ENCODE measurements at regions of chr14 and their contacts with region 1.

Region 1: DNA sequence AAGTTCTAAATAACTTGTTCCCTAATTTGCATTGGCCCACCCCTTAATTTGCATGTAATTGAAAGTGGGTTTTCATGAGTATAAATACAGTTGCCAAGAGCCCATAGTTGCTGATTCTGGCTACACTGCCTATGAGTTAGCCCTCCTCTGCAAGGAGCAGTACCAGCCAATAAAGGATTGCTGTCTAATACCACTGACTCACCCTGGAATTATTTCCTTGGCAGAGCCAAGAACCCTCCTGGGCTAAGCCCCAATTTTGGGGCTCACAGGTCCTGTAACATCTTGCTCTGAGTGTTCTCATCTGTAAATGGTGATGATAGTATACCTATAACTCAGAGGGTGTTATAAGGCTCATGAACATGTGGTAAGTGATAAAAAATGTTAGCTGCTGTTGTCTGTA is 6.8 kb downstream of the TTC8 start:
- DNase-seq: peak in 1 of 2 donors; percentile 77
- H3K4me3 ChIP-seq: no peak overlapping the region
- H3K27ac ChIP-seq: peak overlapping the region; percentile 56 to 81
- H3K4me1 ChIP-seq: peaks cover 8 to 22% of the 10 kb centered on the region in 2 donors
- H3K27me3 ChIP-seq: no peaks in the 10 kb centered on the region
- CTCF ChIP-seq: no peak

Region 2: DNA sequence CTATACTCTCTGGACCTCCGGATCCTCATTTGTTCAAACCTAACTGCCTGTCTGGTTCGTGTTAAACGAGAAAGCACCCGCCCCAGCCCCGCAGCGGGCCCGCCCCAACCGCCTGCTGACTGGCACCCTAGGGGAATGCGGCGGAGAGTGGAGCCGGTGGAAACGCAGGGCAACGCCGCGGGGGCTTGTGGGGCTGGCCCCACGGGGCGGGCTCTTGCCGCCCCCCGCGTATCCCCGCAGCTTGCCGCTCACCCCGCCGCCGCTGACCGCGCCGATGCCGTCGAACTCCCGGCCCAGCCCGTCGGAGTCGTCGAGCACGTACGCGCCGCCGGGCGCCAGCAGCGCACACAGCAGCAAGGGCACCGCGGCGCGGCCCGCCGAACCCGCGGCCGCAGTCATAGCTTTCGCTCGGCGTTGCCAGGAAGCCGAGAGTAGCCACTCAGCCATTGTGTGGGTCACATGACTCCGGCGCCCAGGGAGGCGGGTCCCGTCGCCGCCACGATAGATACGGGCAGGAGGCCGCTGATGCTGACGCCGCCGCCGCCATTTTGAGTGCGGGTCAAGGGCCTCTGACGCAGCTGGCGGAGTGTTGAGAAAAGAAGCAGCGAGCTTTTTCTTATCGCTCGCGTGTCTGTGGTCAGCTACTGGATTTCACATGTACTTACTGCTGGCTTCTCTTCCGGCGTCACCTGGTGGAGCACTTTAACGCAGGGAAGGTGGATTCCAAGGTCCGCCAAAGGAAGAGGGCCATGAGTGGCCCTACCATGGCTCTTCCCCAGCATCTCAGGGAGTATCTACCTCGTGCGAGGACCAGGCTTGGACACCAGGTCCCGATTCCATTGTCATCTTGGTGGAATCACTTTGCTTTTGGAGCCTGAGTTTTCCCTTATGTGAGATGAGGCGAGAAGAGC is 838.3 kb before region 1 on chr14 and contains the start of gene GALC:
- intact Hi-C with region 1: loop called (anchors 5 kb)
- DNase-seq: peak; percentile 90 to 98
- H3K4me3 ChIP-seq: peak within 1 kb of the TSS; percentile 93 to 95
- H3K27ac ChIP-seq: peak within 1 kb of the TSS; percentile 95 to 96
- H3K4me1 ChIP-seq: peaks cover 0 to 16% of the 10 kb centered on the region in 2 donors
- H3K27me3 ChIP-seq: no peaks in the 10 kb centered on the region
- CTCF ChIP-seq: no peak
- total RNA-seq, gene GALC: 31.7 TPM

Region 3: GRCh38 chr14:88765130-88765529 is 66.2 kb before region 1 on chr14:
- intact Hi-C with region 1: no loop called
- DNase-seq: no peak
- H3K4me3 ChIP-seq: no peak overlapping the region
- H3K27ac ChIP-seq: no peak overlapping the region
- H3K4me1 ChIP-seq: no peaks in the 10 kb centered on the region
- H3K27me3 ChIP-seq: no peaks in the 10 kb centered on the region
- CTCF ChIP-seq: no peak

Region 4: DNA sequence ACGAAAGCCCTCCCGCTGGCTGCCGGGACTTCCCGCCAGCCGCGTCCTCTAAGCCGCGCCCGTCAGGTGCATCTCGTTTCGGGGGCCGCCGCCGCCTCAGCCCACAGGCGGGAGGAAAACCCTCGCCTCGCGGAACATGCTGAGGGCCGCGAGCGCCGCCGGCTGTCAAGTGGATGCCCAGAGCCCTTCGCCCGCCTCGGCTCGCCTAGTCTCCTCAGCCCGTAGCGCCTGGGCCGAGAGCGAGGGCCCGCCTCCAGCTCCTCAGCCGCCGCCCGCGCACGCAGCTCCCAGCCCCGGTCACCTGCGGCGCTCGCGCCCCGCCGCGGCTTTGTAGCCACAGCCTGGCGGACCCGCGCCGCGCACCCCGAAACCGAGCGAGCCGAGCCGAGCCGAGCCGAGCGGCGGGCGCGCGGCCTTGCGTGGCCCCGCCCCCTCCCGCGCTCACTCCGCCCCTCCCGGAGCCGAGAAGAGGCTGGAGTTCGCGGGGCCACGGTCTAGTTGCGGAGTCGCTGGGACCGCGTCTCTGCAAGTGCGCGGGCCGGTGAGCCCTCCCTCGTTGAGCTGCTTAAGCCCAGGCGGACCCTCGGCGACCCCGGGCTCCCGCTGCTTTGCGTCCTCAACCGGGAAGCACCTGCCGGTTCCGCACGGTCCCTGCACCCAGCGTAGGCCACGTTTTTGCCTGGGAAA is 38.6 kb before region 1 on chr14 and contains the start of gene EML5:
- intact Hi-C with region 1: loop called (anchors 2 kb)
- DNase-seq: peak; percentile 23 to 90
- H3K4me3 ChIP-seq: peak within 1 kb of the TSS; percentile 71 to 94
- H3K27ac ChIP-seq: peak within 1 kb of the TSS in 1 of 2 donors; percentile 81
- H3K4me1 ChIP-seq: peaks cover 3 to 8% of the 10 kb centered on the region in 2 donors
- H3K27me3 ChIP-seq: no peaks in the 10 kb centered on the region
- CTCF ChIP-seq: peak; percentile 15 to 24 (median 21)
- total RNA-seq, gene EML5: 0.21 TPM

Measured in ascending aorta (tissue), 2 donors.